Astrocyte of the cerebellum (primary cell): ENCODE measurements at regions of chr4 and their contacts with region 1.

Region 1: DNA sequence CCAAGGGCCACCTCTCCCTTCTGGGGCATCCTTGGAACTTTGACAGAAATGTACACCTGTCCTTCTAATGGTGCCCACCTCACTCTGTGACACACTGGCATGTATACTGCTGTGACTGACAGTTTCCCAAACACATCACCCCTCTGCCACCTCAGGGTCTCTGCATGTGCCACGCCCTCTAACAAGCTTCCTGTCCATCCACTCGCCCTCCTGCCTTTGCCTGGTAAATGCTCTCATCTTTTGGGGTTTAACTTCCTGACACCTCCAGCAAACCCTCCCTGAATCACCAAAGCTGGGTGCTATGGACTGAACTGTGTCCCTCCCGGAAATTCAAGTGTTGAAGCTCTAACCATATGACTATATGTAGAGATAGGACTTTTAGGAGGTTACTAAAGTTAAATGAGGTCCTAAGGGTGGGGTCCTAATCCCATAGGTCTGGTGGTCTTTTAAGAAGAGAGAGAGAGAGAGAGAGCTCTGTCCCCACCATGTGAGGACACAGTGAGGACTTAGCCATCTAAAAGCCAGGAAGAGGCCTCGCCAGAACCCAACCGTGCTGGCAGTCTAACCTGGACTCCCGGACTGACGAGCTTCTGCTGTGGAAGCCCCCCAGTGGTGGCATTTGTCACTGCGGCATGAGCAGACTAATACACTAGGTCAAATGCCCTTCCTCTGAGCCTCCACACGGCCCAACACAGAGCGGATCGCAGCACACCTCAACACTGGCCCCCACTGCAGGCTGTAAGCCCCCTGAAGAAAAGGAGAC is 95.6 kb downstream of the AFAP1 start:
- DNase-seq: peak; percentile 74
- H3K4me3 ChIP-seq: no peak overlapping the region
- CTCF ChIP-seq: peak; percentile 76

Region 2: GRCh38 chr4:7886007-7886973 is 42.3 kb after region 1 on chr4:
- in situ Hi-C with region 1: loop called (anchors 5 kb)
- DNase-seq: no peak
- H3K4me3 ChIP-seq: no peak overlapping the region
- CTCF ChIP-seq: no peak

Region 3: GRCh38 chr4:7939377-7940108 is 95.5 kb after region 1 on chr4 and contains the start of gene AFAP1:
- in situ Hi-C with region 1: loop called (anchors 5 kb)
- DNase-seq: peak; percentile 57
- H3K4me3 ChIP-seq: peak within 1 kb of the TSS; percentile 93
- CTCF ChIP-seq: no peak